Dorsolateral prefrontal cortex (tissue), 120 donors: ENCODE measurements at regions of chr5 and their contacts with region 1.

Region 1: GRCh38 chr5:11273180-11273903 is 512.3 kb upstream of the DAP start:
- DNase-seq: no peak
- H3K4me3 ChIP-seq: peak overlapping the region in 35 of 59 donors; percentile 2 to 46 (median 26)
- H3K27ac ChIP-seq: peak overlapping the region in 53 of 59 donors; percentile 0 to 83 (median 56)
- H3K27me3 ChIP-seq: no peaks in the 10 kb centered on the region
- CTCF ChIP-seq: no peak

Region 2: DNA sequence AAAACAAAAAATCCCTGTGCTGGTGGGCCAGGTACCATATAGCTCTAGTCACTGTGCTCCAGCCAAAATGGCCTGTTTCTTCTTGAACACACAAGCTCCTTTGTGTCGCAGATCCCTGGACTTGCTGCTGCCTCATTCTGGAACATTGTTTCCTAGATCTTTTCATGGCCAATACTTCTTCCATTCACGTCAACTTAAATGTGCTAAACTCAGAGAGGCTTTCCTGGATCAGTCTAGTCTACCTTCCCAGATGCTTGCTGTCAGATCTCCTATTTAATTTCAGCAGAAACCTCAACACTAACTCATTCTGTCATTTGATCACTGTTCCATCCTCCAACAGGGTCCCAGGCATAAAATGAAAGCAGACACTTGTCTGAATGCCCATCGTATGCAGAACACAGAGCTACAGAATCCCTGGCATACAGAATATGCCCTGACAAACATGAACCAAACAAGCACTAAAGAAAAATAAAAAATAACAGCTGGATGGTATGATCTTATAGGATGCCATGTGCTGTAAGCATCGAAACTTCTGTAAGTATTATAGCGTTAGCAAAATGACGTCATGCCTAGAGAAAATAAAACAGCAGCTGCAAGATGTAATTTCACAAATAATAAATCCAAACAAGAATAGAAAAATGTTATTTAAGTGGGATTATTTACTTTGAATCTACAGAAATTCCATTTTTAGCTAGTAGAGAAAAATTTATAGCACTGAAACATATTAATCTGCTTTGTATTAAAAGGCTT is 108.6 kb before region 1 on chr5:
- intact Hi-C with region 1: loop called in 1 of 2 experiments (anchors 5 kb)
- DNase-seq: peak in 2 of 10 donors; percentile 32 to 57
- H3K4me3 ChIP-seq: peak overlapping the region in 50 of 59 donors; percentile 2 to 56 (median 28)
- H3K27ac ChIP-seq: peak overlapping the region; percentile 13 to 95 (median 84)
- H3K27me3 ChIP-seq: no peaks in the 10 kb centered on the region
- CTCF ChIP-seq: peak in 1 of 56 donors; percentile 12

Region 3: DNA sequence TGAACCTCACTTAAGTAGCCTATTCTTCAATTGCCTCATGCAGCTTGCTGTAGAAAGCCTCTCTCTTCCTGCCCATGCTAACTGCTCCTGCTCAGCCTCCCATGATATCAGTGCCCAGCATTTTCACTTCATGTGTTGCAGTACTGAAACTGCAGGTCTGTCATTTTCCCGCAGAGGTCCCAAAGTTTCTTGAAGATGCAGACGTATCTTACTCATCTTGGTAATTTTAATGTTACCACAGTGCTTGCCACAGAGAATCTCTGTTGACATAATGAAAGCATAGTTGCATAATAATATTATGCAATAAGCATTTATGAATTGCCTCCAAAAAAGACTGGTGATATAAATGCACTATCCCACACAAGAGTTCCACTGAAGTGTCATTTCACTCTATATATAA is 48.8 kb after region 1 on chr5:
- intact Hi-C with region 1: loop called in 1 of 2 experiments (anchors 10 kb)
- DNase-seq: no peak
- H3K4me3 ChIP-seq: no peak overlapping the region
- H3K27ac ChIP-seq: peak overlapping the region in 21 of 59 donors; percentile 4 to 80 (median 35)
- H3K27me3 ChIP-seq: no peaks in the 10 kb centered on the region
- CTCF ChIP-seq: no peak

Region 4: DNA sequence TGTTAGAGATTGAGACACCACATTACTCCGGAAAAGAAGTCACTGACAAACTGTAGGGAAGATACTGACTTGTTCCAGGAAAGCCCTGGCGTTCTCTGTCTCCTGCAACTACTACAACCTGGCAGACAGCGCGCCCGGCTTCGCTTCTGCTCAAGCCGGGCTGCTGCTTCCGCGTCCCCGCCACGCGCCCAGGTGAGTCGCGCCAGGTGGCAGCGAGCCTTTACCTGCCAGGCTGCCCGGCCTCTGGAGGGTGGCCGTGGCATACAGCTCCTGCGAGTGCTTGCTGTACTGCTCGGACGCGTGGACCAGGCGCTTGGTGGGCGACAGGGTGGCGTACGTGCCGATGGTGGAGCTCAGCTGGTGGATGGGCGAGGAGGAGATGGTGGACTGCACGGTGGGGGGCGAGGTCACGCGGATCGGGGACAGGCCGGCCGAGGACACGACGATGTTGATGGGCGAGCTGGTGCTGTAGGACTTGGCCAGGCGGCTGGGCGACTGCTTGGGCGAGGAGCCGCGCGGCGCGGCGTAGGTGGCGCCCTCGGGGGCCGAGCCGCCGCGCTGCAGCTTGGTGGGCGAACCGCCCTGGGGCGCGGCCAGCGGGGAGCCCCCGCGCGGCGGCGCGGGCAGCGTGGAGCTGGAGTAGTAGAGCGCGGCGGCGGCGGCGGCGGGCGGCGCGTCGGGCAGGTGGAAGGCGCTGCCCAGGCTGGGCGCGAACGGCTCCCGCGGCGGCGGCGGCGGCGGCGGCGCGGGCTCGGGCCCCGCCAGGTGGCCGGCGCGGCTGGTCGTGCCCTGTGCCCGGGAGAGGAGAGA is 111.3 kb after region 1 on chr5:
- intact Hi-C with region 1: loop called in 1 of 2 experiments (anchors 5 kb)
- DNase-seq: peak; percentile 44 to 79 (median 56)
- H3K4me3 ChIP-seq: peak overlapping the region; percentile 36 to 81 (median 65)
- H3K27ac ChIP-seq: peak overlapping the region; percentile 49 to 96 (median 91)
- H3K27me3 ChIP-seq: no peaks in the 10 kb centered on the region
- CTCF ChIP-seq: peak in 30 of 56 donors; percentile 6 to 59 (median 24)

Region 5: DNA sequence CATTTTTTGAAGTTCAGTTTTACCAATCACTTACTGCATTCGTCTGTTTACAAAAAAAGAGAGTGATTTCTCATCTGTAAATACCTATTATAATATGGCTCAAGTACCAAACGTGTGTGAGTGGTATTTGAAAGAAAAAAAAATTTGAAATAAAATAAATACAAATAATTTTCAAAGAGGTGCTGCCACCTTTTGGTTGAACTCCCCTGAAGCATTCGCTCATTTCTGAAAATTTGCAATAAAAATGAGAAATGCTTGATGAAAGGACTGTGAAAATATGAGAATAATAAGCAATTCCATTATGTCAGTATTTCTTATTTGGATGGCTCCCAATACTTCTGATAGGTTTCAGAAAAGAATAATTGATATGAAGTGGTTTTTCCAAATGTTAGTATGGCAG is 221.0 kb after region 1 on chr5:
- intact Hi-C with region 1: loop called (anchors 5 to 10 kb)
- DNase-seq: no peak
- H3K4me3 ChIP-seq: no peak overlapping the region
- H3K27ac ChIP-seq: peak overlapping the region in 5 of 59 donors; percentile 7 to 55 (median 20)
- H3K27me3 ChIP-seq: no peaks in the 10 kb centered on the region
- CTCF ChIP-seq: peak; percentile 46 to 85 (median 65)

Region 6: DNA sequence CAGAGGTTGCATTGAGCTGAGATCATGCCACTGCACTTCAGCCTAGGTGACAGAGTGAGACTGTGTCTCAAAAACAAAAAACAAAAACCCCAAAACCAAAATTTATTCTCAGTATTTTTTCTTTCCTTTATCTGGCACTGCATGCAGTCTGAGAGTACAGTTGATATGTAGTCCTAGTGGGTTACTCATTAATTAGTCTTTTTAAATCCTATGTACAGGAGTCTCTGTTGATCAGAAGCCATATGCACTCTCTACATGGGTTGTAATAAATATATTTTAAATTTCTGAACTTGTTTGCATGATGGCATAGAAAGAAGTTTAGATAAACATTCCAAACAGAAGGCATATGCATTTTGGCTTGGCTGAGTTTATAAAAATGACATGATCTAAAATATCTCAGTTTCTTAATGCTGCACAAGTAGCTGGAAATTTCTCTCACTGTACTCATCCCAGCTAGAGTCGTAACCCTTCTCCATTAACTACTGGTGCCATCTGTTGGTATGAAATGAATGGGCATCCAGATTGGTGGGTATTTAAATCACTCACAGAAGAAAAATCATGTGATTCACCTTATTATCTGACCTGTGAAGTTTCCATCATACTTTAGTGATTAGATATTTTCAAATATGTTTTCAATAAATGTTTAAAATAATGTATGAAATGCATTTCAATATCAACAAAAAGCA is 346.1 kb after region 1 on chr5:
- intact Hi-C with region 1: loop called (anchors 10 kb)
- DNase-seq: no peak
- H3K4me3 ChIP-seq: no peak overlapping the region
- H3K27ac ChIP-seq: peak overlapping the region in 11 of 59 donors; percentile 1 to 54 (median 27)
- H3K27me3 ChIP-seq: no peaks in the 10 kb centered on the region
- CTCF ChIP-seq: peak; percentile 32 to 89 (median 66)

Region 7: GRCh38 chr5:11719888-11720481 is 446.6 kb after region 1 on chr5:
- intact Hi-C with region 1: loop called in 1 of 2 experiments (anchors 10 kb)
- DNase-seq: peak in 9 of 10 donors; percentile 34 to 91 (median 59)
- H3K4me3 ChIP-seq: no peak overlapping the region
- H3K27ac ChIP-seq: peak overlapping the region in 1 of 59 donors; percentile 9
- H3K27me3 ChIP-seq: no peaks in the 10 kb centered on the region
- CTCF ChIP-seq: peak; percentile 38 to 81 (median 67)